Activated T-helper 2 cell treated with anti-CD3 and anti-CD28 coated beads, Interferon-gamma antibody, Interleukin-2, Interleukin-4, amounts not matched to agents 10 μg/mL and 5 μg/mL and 100 μg/mL, durations not matched to agents 14 hours and 24 hours and 36 hours (primary cell): ENCODE measurements at regions of chr17 and their contacts with region 1.

Region 1: DNA sequence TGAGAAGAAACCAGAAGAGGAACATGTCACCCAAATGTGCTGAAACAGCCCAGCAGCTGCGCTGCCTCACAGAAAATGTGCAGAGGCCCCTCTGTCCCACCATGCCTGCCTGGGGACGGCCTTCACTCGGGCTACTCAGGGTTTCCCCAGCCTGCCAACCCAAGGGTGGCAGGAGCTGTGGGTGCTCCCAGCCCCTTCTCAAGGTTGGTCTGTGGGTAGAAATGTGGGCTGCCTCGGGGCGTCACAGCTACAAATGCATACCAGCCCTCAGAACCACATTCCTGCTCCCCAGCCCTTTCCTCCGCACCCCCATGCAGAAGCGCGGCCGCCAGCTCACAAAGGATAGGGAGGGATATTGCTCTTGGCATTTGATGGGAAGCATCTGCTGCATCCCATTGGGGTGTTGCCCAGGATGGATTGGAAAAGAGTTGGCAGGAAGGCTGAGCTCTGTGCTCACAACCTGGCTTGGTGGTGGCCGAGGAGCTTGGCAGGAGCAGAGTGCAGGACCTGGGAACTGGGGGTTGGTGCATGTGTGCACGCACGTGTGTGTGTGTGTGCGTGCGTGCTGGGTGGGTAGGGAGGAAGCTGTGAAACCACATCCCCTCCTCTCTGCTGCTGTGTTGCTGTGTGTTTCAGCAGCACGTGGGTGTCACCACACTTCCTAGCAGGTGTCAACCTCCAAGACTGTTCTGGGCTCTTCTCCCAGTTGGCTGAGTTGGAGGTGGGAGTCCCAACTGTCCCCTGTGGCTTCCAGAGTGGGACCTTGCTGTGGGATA is 304.4 kb downstream of the SEC14L1 start:
- DNase-seq: peak; percentile 85
- H3K4me3 Mint-ChIP-seq: peak overlapping the region; percentile 77
- H3K27ac Mint-ChIP-seq: peak overlapping the region; percentile 99
- H3K4me1 Mint-ChIP-seq: peaks cover 84% of the 10 kb centered on the region
- H3K27me3 Mint-ChIP-seq: no peaks in the 10 kb centered on the region

Region 2: DNA sequence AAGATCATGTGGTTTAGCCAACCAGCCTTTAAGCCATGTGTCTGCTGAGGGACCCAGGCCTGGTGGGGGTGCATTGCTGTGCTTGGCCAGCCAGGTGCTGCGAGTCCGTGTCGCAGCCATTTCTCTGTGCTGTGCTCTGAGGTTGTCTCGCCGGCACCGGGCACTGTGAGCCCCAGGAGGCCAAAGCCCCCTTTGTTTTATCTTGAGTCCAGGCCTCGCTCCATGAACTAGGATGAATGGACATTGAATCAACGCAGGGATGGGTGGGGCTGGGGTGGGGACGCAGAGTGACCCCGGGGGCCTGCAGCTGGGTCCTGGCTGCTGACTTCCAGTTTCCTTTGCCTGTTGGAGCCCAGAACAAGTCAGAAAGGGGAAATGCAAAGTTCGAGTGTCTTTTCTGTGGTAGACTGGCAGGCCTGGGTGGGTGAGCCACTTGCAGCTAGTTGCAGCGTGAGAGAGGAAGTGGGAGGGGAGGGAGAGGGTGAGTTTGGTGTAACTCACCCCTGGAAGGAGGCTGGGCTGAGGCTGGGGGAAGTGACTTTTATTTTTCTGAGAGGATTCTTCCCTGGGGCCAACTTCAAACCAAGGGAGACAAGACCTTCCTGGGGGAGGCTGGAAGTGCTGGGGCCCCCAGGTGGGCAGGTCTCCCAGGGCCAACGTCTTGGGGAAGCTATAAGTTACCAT is 20.3 kb after region 1 on chr17:
- intact Hi-C with region 1: loop called (anchors 1 kb)
- DNase-seq: peak; percentile 77
- H3K4me3 Mint-ChIP-seq: peak overlapping the region; percentile 49
- H3K27ac Mint-ChIP-seq: peak overlapping the region; percentile 80
- H3K4me1 Mint-ChIP-seq: peaks cover 66% of the 10 kb centered on the region
- H3K27me3 Mint-ChIP-seq: no peaks in the 10 kb centered on the region

Region 3: DNA sequence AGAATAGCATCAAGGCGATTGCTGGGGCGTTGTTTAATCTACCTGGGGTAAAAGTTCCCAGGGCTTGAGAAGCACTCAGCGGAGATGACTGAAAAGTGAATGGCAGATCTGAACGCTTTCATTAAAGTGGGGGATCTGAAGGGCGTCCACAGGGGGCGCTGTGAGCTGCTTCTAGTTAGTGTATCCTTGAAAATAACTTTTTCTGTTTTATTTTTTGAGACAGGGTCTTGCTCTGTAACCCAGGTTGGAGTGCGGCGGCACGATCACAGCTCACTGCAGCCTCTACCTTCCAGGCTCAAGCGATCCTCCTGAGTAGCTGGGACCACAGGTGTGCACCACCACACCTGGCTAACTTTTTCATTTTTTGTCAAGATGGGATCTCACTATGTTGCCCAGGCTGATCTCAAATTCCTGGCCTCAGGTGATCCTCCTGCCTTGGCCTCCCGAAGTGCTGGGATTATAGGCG is 56.0 kb after region 1 on chr17:
- intact Hi-C with region 1: no loop called
- DNase-seq: no peak
- H3K4me3 Mint-ChIP-seq: no peak overlapping the region
- H3K27ac Mint-ChIP-seq: no peak overlapping the region
- H3K4me1 Mint-ChIP-seq: no peaks in the 10 kb centered on the region
- H3K27me3 Mint-ChIP-seq: no peaks in the 10 kb centered on the region